BJ (cell line): ENCODE measurements at regions of chr11 and their contacts with region 1.

Region 1: DNA sequence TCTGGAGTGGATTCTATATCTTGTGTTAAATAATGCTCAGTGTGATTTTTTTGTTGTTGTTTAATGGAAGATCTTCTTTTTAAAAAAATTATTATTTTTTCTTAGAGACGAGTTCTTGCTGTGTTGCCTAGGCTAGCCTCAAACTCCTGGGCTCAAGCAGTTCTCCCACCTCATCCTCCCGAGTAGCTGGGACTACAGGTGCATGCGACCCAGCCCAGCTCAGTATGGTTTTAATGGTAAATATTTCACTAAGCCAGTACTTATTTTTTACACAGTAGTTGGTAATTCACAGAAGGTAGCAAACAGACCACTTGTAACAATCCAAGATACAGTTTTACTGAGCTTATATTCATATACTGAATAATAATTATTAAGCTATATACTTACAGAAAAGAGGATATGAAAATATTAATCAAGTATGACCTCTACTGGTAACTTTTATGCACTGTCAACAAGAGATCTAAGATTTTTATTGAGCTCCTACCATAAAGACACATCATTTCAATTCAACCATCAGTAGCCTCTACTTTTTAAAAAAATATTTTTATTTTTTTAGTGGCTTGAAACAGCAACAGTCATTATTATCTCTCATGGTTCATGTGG is 6.1 kb upstream of the CD59 start:
- DNase-seq: no peak
- H3K4me3 ChIP-seq: no peak overlapping the region
- H3K27me3 ChIP-seq: no peaks in the 10 kb centered on the region
- CTCF ChIP-seq: peak; percentile 30; the same call in 1 of the 2 replicates

Region 2: DNA sequence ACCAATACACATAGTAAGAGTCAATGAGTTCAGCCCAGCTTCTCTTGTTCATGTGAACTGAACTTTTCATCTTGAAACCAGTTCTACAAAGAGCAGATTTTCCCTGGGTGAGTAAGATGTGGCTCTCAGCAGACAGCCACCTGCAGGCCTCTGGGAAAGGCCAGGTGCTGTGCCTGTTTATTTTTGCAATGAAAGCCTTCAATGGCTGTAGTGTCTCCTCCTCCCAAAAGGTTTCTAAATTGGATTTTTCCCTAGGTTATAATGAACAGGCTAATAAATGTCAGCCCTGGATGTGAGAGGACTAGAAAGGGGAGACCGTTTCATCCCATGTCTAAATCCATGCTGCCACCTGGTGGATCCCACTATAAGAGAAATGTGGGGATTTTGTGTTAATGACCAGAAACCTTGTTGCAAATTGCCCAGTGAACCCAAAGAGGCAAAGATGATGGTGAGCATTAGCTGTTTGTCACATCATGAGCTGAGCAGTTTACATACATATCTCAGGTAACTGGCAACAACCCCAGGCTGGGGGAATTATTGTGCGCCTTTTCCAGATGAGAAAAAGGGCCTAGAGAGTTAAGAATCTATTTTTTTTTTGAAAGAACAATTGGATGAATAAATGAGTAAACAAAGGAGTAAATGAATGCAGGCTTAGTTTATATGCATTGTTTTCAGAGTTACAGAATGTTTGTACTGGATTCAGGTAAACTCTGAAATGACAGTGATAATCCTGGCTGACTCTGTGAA is 54.4 kb before region 1 on chr11:
- CTCF ChIA-PET with region 1: interaction called, 17 read pairs
- POLR2A ChIA-PET with region 1: no interaction called
- DNase-seq: no peak
- H3K4me3 ChIP-seq: no peak overlapping the region
- H3K27me3 ChIP-seq: no peaks in the 10 kb centered on the region
- CTCF ChIP-seq: peak; percentile 69

Region 3: GRCh38 chr11:33695051-33695566 is 47.2 kb before region 1 on chr11:
- CTCF ChIA-PET with region 1: interaction called, 11 read pairs
- POLR2A ChIA-PET with region 1: no interaction called
- DNase-seq: no peak
- H3K4me3 ChIP-seq: no peak overlapping the region
- H3K27me3 ChIP-seq: no peaks in the 10 kb centered on the region
- CTCF ChIP-seq: no peak

Region 4: DNA sequence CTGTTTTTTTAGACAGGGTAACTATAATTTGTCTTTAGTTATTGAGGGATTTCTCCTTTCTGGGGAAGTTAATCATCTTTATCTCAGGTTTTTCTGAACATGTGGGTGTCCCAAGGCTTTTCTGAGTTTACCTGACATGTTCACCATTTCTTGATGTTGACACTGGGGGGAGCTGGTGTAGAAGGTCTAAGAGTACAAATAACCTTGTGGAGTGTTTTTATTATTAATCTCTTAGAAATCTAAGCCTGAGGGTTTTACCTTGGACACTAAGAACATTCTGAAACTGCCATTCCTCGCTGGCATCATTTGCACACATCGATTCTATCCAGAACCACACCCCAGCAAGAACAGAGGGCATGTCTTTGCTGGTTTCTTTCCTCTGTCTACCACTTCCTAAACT is 26.1 kb before region 1 on chr11:
- CTCF ChIA-PET with region 1: interaction called, 12 read pairs
- POLR2A ChIA-PET with region 1: no interaction called
- DNase-seq: no peak
- H3K4me3 ChIP-seq: no peak overlapping the region
- H3K27me3 ChIP-seq: no peaks in the 10 kb centered on the region
- CTCF ChIP-seq: peak; percentile 39

Region 5: DNA sequence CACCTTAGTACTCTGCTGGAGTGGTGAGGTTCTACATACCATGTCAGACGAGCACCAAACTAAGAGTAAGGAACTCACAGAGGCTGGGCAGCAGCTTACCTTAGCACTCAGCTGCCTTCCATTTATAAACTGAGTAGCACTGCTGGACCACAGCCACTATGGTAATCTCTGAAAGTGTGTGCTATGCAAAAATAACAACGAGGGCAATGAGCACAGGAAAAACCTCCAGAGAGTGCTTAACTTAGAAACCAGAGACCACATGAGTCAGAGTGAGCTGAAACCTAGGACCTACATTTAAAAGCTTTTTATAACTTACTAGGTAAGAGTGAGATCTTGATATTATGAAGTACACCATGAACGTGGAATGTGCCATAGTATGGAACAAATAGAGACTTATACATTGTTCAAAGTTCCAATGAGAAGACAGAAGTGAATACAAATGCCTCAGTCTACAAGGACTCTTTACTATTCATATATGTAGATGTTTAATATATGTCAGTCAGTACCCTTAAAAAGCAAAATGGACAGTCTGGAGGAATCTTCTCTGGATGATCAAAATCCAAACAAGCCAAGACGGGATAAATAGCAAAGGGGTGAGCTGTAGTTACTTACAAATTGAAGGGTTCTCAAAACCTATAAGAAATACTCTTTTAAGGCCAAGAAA is 11.1 kb after region 1 on chr11:
- CTCF ChIA-PET with region 1: interaction called, 18 read pairs
- POLR2A ChIA-PET with region 1: no interaction called
- DNase-seq: no peak
- H3K4me3 ChIP-seq: no peak overlapping the region
- H3K27me3 ChIP-seq: no peaks in the 10 kb centered on the region
- CTCF ChIP-seq: no peak

Region 6: DNA sequence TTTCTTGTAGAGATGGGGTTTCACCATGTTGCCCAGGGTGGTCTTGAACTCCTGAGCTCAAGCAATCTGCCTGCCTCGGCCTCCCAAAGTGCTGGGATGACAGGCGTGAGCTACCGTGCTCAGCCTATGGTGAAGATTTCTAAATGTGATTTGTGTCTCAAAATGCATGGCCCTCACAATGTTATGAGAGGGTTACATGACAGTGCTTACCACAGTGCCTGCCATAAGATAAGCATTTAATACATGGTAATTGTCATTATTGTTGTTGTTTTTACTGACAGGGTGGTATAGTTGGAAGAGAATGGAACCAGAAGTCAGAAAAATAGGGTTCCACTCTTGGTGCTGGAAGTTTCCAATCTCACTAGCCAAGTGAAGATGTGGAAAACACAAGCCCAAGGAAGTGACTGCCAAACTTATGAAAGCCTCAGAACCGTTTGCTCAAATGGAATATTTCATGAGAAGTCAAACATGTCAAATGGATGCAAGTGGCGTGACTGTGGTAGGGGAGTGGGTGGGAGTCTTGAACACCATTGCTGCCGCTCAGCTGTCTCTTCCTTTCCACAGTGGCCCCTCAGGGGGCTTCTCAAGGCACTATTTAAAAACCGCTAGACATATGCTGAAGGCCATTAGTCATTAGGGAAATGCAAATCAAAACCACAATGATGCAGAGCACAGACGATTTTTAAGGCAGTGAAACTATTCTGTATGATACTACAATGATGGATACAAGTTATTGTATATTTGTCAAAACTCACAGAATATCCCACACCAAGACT is 178.7 kb after region 1 on chr11:
- CTCF ChIA-PET with region 1: no interaction called
- POLR2A ChIA-PET with region 1: no interaction called
- DNase-seq: no peak
- H3K4me3 ChIP-seq: no peak overlapping the region
- H3K27me3 ChIP-seq: peaks cover 9% of the 10 kb centered on the region
- CTCF ChIP-seq: no peak